Common myeloid progenitor, CD34-positive (primary cell): ENCODE measurements at regions of chr7 and their contacts with region 1.

Region 1: GRCh38 chr7:47497367-47498096 is 84.4 kb downstream of the TNS3 start:
- DNase-seq: peak in 2 of 3 donors; percentile 72 to 78
- H3K4me3 ChIP-seq: peak overlapping the region in 1 of 7 experiments; percentile 14
- H3K27ac ChIP-seq: peak overlapping the region in 1 of 2 experiments; percentile 66
- H3K4me1 ChIP-seq: peaks cover 10 to 98% (median 90%) of the 10 kb centered on the region in 4 experiments
- H3K27me3 ChIP-seq: no peaks in the 10 kb centered on the region

Region 2: GRCh38 chr7:47513741-47514241 is 16.3 kb after region 1 on chr7:
- CTCF ChIA-PET with region 1: interaction called, 22 read pairs
- POLR2A ChIA-PET with region 1: no interaction called
- DNase-seq: peak in 2 of 3 donors; percentile 79 to 89
- H3K4me3 ChIP-seq: peak overlapping the region in 3 of 7 experiments; percentile 1 to 8 (median 8)
- H3K27ac ChIP-seq: peak overlapping the region; percentile 12 to 15
- H3K4me1 ChIP-seq: peaks cover 12 to 64% (median 51%) of the 10 kb centered on the region in 4 experiments
- H3K27me3 ChIP-seq: no peaks in the 10 kb centered on the region